MCF 10A (cell line): ENCODE measurements at regions of chr10 and their contacts with region 1.

Region 1: DNA sequence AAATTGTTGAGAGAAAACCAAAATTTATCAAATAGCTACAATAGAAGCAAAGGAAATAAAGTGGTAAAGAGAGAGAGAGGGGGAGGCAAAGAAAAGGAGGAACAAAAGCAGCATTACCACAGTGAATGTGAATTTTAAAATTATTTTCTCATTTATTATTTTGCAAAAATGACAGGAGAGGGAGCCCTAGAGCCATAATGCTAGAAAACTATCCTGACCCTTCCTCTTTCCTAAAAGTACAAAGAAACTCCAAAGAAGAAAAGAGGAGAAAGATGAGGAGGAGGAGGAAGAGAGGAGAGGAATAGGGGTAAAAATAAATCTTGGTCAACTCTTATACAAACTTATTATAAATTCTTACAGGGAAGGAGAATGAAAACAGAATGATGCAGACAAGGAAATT is 921.5 kb downstream of the NRG3 start:
- DNase-seq: peak; percentile 23
- H3K4me3 Mint-ChIP-seq: no peak overlapping the region
- H3K27ac Mint-ChIP-seq: no peak overlapping the region
- H3K4me1 Mint-ChIP-seq: no peaks in the 10 kb centered on the region
- H3K27me3 Mint-ChIP-seq: no peaks in the 10 kb centered on the region
- CTCF ChIP-seq: peak; percentile 76

Region 2: DNA sequence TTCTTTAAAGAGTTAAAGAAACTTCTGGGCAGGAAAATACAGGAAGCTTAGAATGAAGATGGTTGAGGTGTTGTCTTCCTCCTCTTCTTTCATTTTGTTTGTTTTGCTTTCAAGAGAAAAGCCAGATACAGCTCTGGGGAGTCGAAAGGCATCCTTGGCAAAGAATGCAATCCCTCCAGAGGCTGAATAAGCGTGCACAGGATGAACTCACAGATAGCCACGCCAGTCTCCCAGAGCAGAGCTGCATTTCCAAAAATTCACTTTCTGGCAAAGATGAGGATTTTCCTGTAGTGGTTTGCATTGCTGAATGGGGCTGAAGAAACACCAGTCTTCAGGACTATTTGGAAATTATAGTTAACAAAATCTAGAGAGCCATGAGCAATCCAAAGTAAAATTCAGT is 585.2 kb before region 1 on chr10:
- CTCF ChIA-PET with region 1: no interaction called
- POLR2A ChIA-PET with region 1: no interaction called
- intact Hi-C with region 1: loop called (anchors 10 kb)
- DNase-seq: no peak
- H3K4me3 Mint-ChIP-seq: no peak overlapping the region
- H3K27ac Mint-ChIP-seq: no peak overlapping the region
- H3K4me1 Mint-ChIP-seq: peaks cover 16% of the 10 kb centered on the region
- H3K27me3 Mint-ChIP-seq: no peaks in the 10 kb centered on the region
- CTCF ChIP-seq: no peak

Region 3: GRCh38 chr10:82680608-82681007 is 115.9 kb before region 1 on chr10:
- CTCF ChIA-PET with region 1: no interaction called
- POLR2A ChIA-PET with region 1: no interaction called
- intact Hi-C with region 1: no loop called
- DNase-seq: no peak
- H3K4me3 Mint-ChIP-seq: no peak overlapping the region
- H3K27ac Mint-ChIP-seq: no peak overlapping the region
- H3K4me1 Mint-ChIP-seq: no peaks in the 10 kb centered on the region
- H3K27me3 Mint-ChIP-seq: no peaks in the 10 kb centered on the region
- CTCF ChIP-seq: no peak

Region 4: GRCh38 chr10:82969405-82969804 is 172.9 kb after region 1 on chr10:
- CTCF ChIA-PET with region 1: interaction called, 47 read pairs
- POLR2A ChIA-PET with region 1: interaction called, 5 read pairs
- intact Hi-C with region 1: loop called (anchors 1 kb)
- DNase-seq: peak; percentile 24
- H3K4me3 Mint-ChIP-seq: no peak overlapping the region
- H3K27ac Mint-ChIP-seq: no peak overlapping the region
- H3K4me1 Mint-ChIP-seq: no peaks in the 10 kb centered on the region
- H3K27me3 Mint-ChIP-seq: no peaks in the 10 kb centered on the region
- CTCF ChIP-seq: peak; percentile 50

Region 5: GRCh38 chr10:82982110-82982608 is 185.6 kb after region 1 on chr10:
- CTCF ChIA-PET with region 1: interaction called, 13 read pairs
- POLR2A ChIA-PET with region 1: no interaction called
- intact Hi-C with region 1: no loop called
- DNase-seq: peak; percentile 84
- H3K4me3 Mint-ChIP-seq: no peak overlapping the region
- H3K27ac Mint-ChIP-seq: peak overlapping the region; percentile 57
- H3K4me1 Mint-ChIP-seq: peaks cover 16% of the 10 kb centered on the region
- H3K27me3 Mint-ChIP-seq: no peaks in the 10 kb centered on the region
- CTCF ChIP-seq: no peak

Region 6: GRCh38 chr10:83037653-83038052 is 241.1 kb after region 1 on chr10:
- CTCF ChIA-PET with region 1: no interaction called
- POLR2A ChIA-PET with region 1: no interaction called
- intact Hi-C with region 1: no loop called
- DNase-seq: peak; percentile 11
- H3K4me3 Mint-ChIP-seq: no peak overlapping the region
- H3K27ac Mint-ChIP-seq: no peak overlapping the region
- H3K4me1 Mint-ChIP-seq: no peaks in the 10 kb centered on the region
- H3K27me3 Mint-ChIP-seq: no peaks in the 10 kb centered on the region
- CTCF ChIP-seq: no peak

Region 7: GRCh38 chr10:84097787-84098353 is 1301.4 kb after region 1 on chr10:
- CTCF ChIA-PET with region 1: interaction called, 4 read pairs
- POLR2A ChIA-PET with region 1: no interaction called
- intact Hi-C with region 1: loop called (anchors 5 kb)
- DNase-seq: peak; percentile 28
- H3K4me3 Mint-ChIP-seq: no peak overlapping the region
- H3K27ac Mint-ChIP-seq: no peak overlapping the region
- H3K4me1 Mint-ChIP-seq: no peaks in the 10 kb centered on the region
- H3K27me3 Mint-ChIP-seq: no peaks in the 10 kb centered on the region
- CTCF ChIP-seq: peak; percentile 59